ENCODE measurements at regions of chr1 and their contacts with region 1.

Region 1: GRCh38 chr1:25695090-25695770 is 78.6 kb downstream of the MAN1C1 start:
- DNase-seq: peak; percentile 94

Region 2: DNA sequence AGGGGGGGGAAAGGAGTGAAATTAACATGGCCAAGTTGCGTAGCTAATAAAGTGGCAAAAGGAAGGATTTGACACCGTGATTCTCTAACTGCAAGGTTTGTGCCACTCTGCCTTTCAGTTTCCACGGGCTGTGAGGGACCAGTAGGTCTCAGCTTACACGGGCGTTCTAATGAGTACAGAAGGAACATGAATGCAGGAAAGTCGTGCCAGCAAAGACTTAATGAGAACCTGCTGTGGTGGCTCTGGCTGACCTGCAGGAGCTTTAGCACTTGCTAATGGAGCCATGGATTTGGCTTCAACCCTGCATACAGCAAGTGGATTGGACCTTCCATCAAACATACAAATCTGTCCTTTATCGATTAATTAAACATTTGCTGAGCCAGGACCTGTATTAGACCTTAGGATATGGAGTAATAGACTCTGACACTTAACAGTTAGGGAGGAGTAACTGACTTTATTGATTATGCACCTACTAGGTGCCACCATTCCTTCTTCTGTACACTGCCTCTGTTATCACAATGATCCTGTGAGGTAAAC is 1932.1 kb before region 1 on chr1:
- intact Hi-C with region 1: loop called in 1 of 2 experiments (anchors 5 kb)
- DNase-seq: no peak

Region 3: DNA sequence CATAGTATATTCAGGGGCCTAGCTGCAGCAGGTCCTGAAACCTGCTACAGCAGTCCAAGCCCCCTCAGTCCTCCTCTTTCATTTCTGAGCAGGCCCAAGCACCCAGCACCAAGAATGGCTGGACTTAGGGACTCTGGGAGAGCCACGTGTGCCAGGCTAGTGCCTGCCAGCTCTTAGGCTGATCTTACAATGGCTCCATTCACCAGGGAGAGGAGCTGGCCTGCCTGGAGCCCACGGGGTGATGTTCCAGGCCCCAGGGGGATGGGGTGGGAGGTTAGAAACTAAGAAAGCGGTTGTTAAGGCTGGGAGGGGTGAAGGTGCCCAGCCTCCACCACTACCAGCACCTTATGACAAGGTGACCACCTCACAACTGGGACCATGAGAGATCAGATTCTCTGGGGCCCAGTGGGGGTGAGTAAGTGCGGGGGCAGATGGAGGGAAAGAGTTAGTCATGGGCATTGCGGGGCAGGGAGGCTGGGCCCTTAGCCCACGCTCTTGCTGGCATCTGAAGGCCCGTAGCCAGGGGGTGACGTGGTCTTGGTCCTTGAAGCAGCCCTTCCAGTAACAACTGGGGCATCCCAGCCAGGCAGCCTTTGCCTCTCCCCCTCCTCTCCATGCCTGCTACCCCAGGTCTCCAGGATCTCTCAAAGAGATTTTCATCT is 980.2 kb before region 1 on chr1:
- intact Hi-C with region 1: loop called in 1 of 2 experiments (anchors 10 kb)
- DNase-seq: no peak

Region 4: DNA sequence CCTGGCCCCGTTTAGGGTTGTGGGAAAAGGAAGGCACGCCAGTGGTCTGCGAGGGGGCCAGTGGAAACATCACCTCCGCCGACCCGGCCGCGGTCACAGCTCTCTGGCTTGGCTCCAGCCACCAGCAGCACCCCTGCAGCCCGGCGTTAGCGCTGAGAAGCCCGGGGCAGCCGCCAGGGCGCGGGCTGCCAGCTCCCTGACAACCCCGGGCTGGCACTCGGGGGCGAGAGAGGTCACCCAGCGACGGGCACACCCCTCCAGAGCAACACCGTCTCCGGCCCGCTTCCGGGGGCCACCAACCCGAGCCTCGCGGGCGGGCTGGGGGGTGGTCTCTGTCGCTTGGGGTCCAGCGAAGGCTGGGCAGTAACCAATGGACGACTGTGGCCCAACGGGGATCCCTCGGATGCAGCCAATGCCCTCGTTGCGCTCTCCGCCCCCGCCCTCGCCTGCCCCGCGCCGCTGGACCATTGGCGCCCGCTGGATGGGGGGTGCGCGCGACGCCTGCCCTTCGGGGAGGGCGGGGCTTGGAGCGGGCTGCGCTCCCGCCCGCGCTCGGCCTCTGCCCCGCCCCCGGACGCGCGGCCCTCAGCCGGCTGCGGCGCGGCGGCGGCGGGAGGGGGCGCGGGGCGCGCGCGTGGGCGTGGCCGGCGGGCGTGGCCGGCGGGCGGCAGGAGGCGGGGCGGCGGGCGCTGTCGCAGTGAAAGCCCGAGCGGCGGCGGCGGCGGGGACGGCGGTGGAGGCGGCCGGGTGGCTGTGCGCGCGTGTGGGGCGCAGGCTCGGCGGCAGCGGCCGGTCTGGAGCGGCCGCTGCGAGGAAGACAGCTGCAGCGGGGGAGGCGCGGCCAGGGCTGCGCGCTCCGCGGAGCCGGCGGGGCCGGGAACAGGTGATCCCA is 78.9 kb before region 1 on chr1 and contains the start of gene MAN1C1:
- intact Hi-C with region 1: loop called (anchors 5 kb)
- DNase-seq: peak; percentile 94
- total RNA-seq, gene MAN1C1: 15.0 to 29.4 TPM

Region 5: GRCh38 chr1:25624156-25624555 is 71.1 kb before region 1 on chr1:
- intact Hi-C with region 1: loop called (anchors 5 kb)
- DNase-seq: no peak

Region 6: GRCh38 chr1:25796811-25797458 is 101.7 kb after region 1 on chr1:
- intact Hi-C with region 1: loop called in 1 of 2 experiments (anchors 10 kb)
- DNase-seq: peak; percentile 96

Measured in posterior vena cava (tissue), 2 donors.